Panc1 (cell line): ENCODE measurements at regions of chr4 and their contacts with region 1.

Region 1: DNA sequence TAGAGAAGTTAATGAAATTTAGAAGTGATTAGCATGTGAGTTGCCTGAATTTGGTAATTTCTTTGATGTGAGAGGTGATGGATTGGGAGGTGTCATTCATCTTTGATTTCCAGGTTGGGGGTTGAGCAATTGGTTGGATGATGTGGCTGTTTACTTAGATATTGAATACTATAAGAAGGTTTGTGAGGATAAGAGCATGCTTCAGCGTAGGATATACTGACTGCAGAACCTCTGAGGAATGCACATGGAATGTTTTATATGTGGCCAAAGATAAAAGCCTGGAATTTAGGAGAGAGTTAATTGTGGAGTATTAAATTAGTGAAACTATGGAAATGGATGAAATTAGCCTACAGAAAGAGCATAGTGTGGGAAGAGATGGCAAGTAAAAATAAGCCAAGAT is 165.4 kb upstream of the MAD2L1 start:
- DNase-seq: no peak
- ATAC-seq: no peak
- H3K4me3 ChIP-seq: no peak overlapping the region
- H3K27ac ChIP-seq: no peak overlapping the region
- H3K4me1 ChIP-seq: no peaks in the 10 kb centered on the region
- H3K27me3 ChIP-seq: no peaks in the 10 kb centered on the region
- CTCF ChIP-seq: no peak

Region 2: DNA sequence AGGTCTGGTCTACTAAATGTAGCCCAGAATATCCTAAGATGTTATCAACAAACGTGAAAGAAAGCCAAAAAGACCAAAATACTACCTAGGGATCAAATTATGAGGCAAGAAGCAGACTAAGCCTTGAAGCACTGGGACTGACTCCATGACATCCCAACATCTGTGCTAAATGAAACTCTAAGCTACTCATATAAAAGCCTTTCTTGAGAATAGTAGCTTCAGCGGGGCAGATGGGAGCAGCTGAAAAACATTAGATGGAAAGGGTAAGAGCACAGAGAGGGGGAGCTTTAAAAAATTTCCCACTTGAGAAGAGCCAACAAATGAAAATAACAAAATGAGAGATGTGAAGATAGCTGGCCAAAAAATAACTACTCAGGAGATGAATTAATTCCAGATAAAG is 247.1 kb before region 1 on chr4:
- CTCF ChIA-PET with region 1: no interaction called
- POLR2A ChIA-PET with region 1: no interaction called
- in situ Hi-C with region 1: no loop called
- intact Hi-C with region 1: no loop called
- DNase-seq: no peak
- ATAC-seq: no peak
- H3K4me3 ChIP-seq: no peak overlapping the region
- H3K27ac ChIP-seq: no peak overlapping the region
- H3K4me1 ChIP-seq: no peaks in the 10 kb centered on the region
- H3K27me3 ChIP-seq: no peaks in the 10 kb centered on the region
- CTCF ChIP-seq: no peak

Region 3: GRCh38 chr4:120018786-120019185 is 213.3 kb before region 1 on chr4:
- CTCF ChIA-PET with region 1: no interaction called
- POLR2A ChIA-PET with region 1: no interaction called
- in situ Hi-C with region 1: no loop called
- intact Hi-C with region 1: no loop called
- DNase-seq: no peak
- ATAC-seq: no peak
- H3K4me3 ChIP-seq: no peak overlapping the region
- H3K27ac ChIP-seq: no peak overlapping the region
- H3K4me1 ChIP-seq: no peaks in the 10 kb centered on the region
- H3K27me3 ChIP-seq: no peaks in the 10 kb centered on the region
- CTCF ChIP-seq: no peak

Region 4: GRCh38 chr4:120207021-120207420 is 25.0 kb before region 1 on chr4:
- CTCF ChIA-PET with region 1: no interaction called
- POLR2A ChIA-PET with region 1: interaction called, 10 read pairs
- in situ Hi-C with region 1: no loop called
- intact Hi-C with region 1: no loop called
- DNase-seq: no peak
- ATAC-seq: no peak
- H3K4me3 ChIP-seq: no peak overlapping the region
- H3K27ac ChIP-seq: no peak overlapping the region
- H3K4me1 ChIP-seq: no peaks in the 10 kb centered on the region
- H3K27me3 ChIP-seq: no peaks in the 10 kb centered on the region
- CTCF ChIP-seq: no peak